ENCODE measurements at regions of chr14 and their contacts with region 1.

Region 1: DNA sequence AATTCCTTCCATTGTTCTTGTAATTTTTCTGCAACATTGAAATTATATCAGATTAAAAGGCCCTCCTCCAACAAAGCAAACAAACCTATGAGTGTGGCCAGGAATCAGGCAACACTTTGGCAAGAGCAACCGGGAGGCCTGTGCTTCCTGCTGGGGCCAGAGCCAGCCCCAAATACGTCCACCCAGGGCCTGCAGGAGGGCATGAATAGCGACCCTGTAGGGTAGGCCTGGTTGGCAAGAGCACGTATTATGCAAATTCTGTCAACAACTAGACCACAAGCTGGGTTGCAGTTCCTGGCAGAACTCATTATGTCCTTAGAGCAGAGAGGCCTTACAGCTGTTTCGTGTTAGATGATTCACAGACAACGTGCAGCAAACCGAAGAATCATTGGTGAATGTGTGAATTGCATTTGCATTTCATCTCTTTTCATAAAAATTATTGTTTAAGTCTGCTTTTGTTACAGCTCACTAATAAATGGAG is 26.9 kb upstream of the LGALS3 start:
- DNase-seq: peak; percentile 62 to 84
- ATAC-seq: peak; percentile 69 to 76
- H3K4me3 ChIP-seq: peak overlapping the region; percentile 33; the same call in 2 of the 3 replicates
- H3K27ac ChIP-seq: peak overlapping the region; percentile 91 to 93
- H3K4me1 ChIP-seq: peaks cover 27% of the 10 kb centered on the region
- CTCF ChIP-seq: no peak
- EP300 ChIP-seq: no peak
- POLR2A ChIP-seq: no peak; the same call in 1 of the 2 replicates
- RAD21 ChIP-seq: no peak; a peak in 1 of 5 replicates

Region 2: DNA sequence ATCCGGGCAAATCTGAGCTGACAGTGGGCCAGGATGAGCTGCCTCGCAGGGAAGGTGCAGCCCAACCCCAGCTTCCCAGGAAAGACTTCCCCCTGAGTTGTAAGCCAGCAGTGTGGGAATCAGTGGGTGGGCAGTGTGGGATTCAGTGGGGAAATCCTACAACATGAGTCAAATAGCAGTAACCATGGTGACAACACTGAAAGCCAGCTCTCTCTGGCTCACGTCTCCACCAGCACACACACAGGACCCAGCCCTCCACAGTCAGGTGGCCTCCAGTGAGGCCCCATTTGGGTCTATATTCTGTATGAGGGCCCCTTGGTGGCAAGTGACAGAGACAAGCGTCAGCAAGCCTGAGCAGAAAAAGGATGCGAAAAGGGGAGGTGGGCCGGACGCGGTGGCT is 20.9 kb after region 1 on chr14:
- CTCF ChIA-PET with region 1: interaction called, 16 read pairs
- POLR2A ChIA-PET with region 1: interaction called, 20 read pairs
- DNase-seq: no peak
- ATAC-seq: peak in 1 of 2 experiments; percentile 36; a peak in 2 of 6 replicates
- H3K4me3 ChIP-seq: no peak overlapping the region
- H3K27ac ChIP-seq: no peak overlapping the region
- H3K4me1 ChIP-seq: peaks cover 27% of the 10 kb centered on the region
- CTCF ChIP-seq: no peak
- EP300 ChIP-seq: no peak
- POLR2A ChIP-seq: no peak
- RAD21 ChIP-seq: no peak

Region 3: GRCh38 chr14:55129428-55130195 is 27.4 kb after region 1 on chr14:
- CTCF ChIA-PET with region 1: interaction called, 16 read pairs
- POLR2A ChIA-PET with region 1: interaction called, 63 read pairs
- DNase-seq: peak; percentile 72 to 82
- ATAC-seq: peak; percentile 87 to 88
- H3K4me3 ChIP-seq: peak overlapping the region; percentile 69
- H3K27ac ChIP-seq: peak overlapping the region; percentile 76 to 93
- H3K4me1 ChIP-seq: peaks cover 19% of the 10 kb centered on the region
- CTCF ChIP-seq: no peak
- EP300 ChIP-seq: no peak
- POLR2A ChIP-seq: no peak
- RAD21 ChIP-seq: no peak

Measured in A549 (cell line).